Mammary epithelial cell (primary cell): ENCODE measurements at regions of chr12 and their contacts with region 1.

Region 1: DNA sequence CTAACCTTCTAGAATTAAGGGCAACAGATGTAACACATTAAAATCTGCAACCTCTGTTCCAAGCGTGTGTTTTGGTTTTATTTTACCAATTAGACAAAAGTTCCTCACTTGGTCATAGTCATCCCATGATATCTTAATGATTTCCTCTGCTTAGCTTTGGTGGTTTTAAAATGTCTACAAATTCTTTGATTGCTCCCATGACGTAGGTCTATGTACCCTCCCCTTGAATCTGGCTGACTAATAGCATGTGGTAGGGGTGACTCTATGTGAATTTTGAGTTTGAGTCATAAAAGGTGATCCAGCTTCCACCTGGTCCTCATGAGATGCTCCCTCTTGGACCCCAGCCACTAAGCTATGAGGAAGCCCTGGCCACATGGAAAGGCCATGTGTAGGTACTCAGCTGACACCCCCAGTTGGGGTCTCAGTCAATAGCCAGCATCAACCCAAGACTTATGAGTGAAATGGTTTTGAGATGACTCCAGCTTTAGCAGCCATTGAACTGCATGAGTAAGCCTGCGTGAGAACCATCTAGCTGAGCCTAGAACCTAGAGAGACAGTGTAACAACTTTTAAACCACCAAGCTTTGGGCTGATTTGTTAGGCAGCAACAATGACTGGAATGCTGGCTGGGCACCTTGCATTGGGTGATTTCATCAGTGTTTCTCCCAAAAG is 247.1 kb downstream of the MSRB3 start:
- DNase-seq: peak; percentile 68
- H3K4me3 ChIP-seq: no peak overlapping the region
- H3K27ac ChIP-seq: peak overlapping the region; percentile 92
- H3K4me1 ChIP-seq: peaks cover 45% of the 10 kb centered on the region
- H3K27me3 ChIP-seq: no peaks in the 10 kb centered on the region
- CTCF ChIP-seq: no peak

Region 2: GRCh38 chr12:65248656-65249633 is 276.7 kb before region 1 on chr12:
- CTCF ChIA-PET with region 1: no interaction called
- dilution Hi-C with region 1: no loop called
- in situ Hi-C with region 1: no loop called
- intact Hi-C with region 1: no loop called
- DNase-seq: no peak
- H3K4me3 ChIP-seq: no peak overlapping the region
- H3K27ac ChIP-seq: no peak overlapping the region
- H3K4me1 ChIP-seq: no peaks in the 10 kb centered on the region
- H3K27me3 ChIP-seq: no peaks in the 10 kb centered on the region
- CTCF ChIP-seq: no peak

Region 3: DNA sequence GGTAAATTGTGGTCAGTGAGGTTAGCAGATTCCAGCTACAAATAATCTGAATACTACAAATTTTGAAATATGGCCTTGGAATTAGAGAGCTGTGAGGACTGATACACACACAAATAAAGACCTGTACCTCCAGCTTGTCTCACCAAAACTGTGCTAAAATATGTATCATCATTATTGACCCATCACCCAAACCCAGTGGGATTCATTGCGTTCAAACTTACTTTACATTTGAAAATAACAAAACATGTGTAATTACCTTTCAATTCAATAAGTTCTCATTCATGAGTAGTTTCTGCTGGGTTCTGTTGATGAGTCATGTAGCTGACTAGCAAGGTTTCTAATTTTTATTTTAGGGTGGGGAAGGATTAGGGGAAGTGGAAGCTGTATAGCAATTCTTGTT is 76.2 kb before region 1 on chr12:
- CTCF ChIA-PET with region 1: no interaction called
- dilution Hi-C with region 1: no loop called
- in situ Hi-C with region 1: no loop called
- intact Hi-C with region 1: no loop called
- DNase-seq: peak; percentile 65
- H3K4me3 ChIP-seq: no peak overlapping the region
- H3K27ac ChIP-seq: peak overlapping the region; percentile 32
- H3K4me1 ChIP-seq: peaks cover 9% of the 10 kb centered on the region
- H3K27me3 ChIP-seq: no peaks in the 10 kb centered on the region
- CTCF ChIP-seq: no peak

Region 4: GRCh38 chr12:65561798-65562382 is 36.3 kb after region 1 on chr12:
- CTCF ChIA-PET with region 1: no interaction called
- dilution Hi-C with region 1: loop called (anchors 5 kb)
- in situ Hi-C with region 1: no loop called
- intact Hi-C with region 1: no loop called
- DNase-seq: peak; percentile 48
- H3K4me3 ChIP-seq: no peak overlapping the region
- H3K27ac ChIP-seq: no peak overlapping the region
- H3K4me1 ChIP-seq: peaks cover 40% of the 10 kb centered on the region
- H3K27me3 ChIP-seq: no peaks in the 10 kb centered on the region
- CTCF ChIP-seq: no peak

Region 5: GRCh38 chr12:65891987-65892481 is 366.4 kb after region 1 on chr12:
- CTCF ChIA-PET with region 1: no interaction called
- dilution Hi-C with region 1: no loop called
- in situ Hi-C with region 1: no loop called
- intact Hi-C with region 1: no loop called
- DNase-seq: peak; percentile 97
- H3K4me3 ChIP-seq: no peak overlapping the region
- H3K27ac ChIP-seq: peak overlapping the region; percentile 78
- H3K4me1 ChIP-seq: peaks cover 78% of the 10 kb centered on the region
- H3K27me3 ChIP-seq: no peaks in the 10 kb centered on the region
- CTCF ChIP-seq: no peak